ENCODE measurements at regions of chr6 and their contacts with region 1.

Region 1: GRCh38 chr6:1596088-1596852 is 13.4 kb upstream of the FOXC1 start:
- DNase-seq: peak; percentile 91
- H3K4me3 ChIP-seq: peak overlapping the region; percentile 34 to 60
- H3K27ac ChIP-seq: no peak overlapping the region
- H3K4me1 ChIP-seq: peaks cover 0 to 13% of the 10 kb centered on the region in 2 experiments; a peak in 1 of 4 replicates
- H3K27me3 ChIP-seq: peaks cover 44% of the 10 kb centered on the region
- CTCF ChIP-seq: peak; percentile 92
- EP300 ChIP-seq: no peak
- RAD21 ChIP-seq: peak; percentile 90

Region 2: DNA sequence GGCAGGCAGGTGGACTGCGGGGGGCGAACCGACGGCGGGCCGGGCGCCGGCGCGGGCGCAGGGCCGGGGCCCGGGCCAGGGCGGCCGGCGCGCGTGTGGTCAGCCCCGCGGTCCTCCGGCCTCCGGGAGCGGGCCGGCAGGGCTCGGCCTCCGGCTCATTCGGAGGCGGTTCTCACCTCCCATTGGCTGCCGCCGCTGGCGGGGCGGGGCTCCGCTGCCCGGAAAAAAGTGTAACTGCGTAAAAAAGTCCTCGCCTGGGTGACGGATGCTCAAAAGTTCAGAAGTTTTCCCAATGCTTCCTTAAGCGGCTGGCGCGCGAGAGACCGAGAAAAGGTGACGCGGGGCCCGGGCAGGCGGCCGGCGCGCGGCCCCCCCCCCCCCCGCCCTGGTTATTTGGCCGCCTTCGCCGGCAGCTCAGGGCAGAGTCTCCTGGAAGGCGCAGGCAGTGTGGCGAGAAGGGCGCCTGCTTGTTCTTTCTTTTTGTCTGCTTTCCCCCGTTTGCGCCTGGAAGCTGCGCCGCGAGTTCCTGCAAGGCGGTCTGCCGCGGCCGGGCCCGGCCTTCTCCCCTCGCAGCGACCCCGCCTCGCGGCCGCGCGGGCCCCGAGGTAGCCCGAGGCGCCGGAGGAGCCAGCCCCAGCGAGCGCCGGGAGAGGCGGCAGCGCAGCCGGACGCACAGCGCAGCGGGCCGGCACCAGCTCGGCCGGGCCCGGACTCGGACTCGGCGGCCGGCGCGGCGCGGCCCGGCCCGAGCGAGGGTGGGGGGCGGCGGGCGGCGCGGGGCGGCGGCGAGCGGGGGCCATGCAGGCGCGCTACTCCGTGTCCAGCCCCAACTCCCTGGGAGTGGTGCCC is 13.6 kb after region 1 on chr6 and contains the start of gene FOXC1:
- CTCF ChIA-PET with region 1: interaction called, 25 read pairs
- POLR2A ChIA-PET with region 1: no interaction called
- DNase-seq: peak; percentile 97
- H3K4me3 ChIP-seq: peak within 1 kb of the TSS; percentile 70 to 79
- H3K27ac ChIP-seq: peak within 1 kb of the TSS; percentile 72 to 90
- H3K4me1 ChIP-seq: peaks cover 0 to 6% of the 10 kb centered on the region in 2 experiments; a peak in 1 of 4 replicates
- H3K27me3 ChIP-seq: no peaks in the 10 kb centered on the region
- CTCF ChIP-seq: no peak
- EP300 ChIP-seq: no peak
- RAD21 ChIP-seq: no peak
- polyA plus RNA-seq, gene FOXC1: 3.6 and 4.3 TPM in 2 replicates

Region 3: GRCh38 chr6:2111162-2111677 is 515.0 kb after region 1 on chr6:
- CTCF ChIA-PET with region 1: interaction called, 20 read pairs
- POLR2A ChIA-PET with region 1: no interaction called
- DNase-seq: no peak
- H3K4me3 ChIP-seq: no peak overlapping the region
- H3K27ac ChIP-seq: peak overlapping the region in 1 of 2 experiments; percentile 73; a peak in 2 of 4 replicates
- H3K4me1 ChIP-seq: peaks cover 0 to 7% of the 10 kb centered on the region in 2 experiments; a peak in 1 of 4 replicates
- H3K27me3 ChIP-seq: no peaks in the 10 kb centered on the region
- CTCF ChIP-seq: no peak
- EP300 ChIP-seq: peak in 1 of 2 experiments; percentile 15; a peak in 1 of 4 replicates
- RAD21 ChIP-seq: no peak

Region 4: GRCh38 chr6:2196079-2196679 is 599.9 kb after region 1 on chr6:
- CTCF ChIA-PET with region 1: interaction called, 41 read pairs
- POLR2A ChIA-PET with region 1: interaction called, 4 read pairs
- DNase-seq: peak; percentile 57
- H3K4me3 ChIP-seq: no peak overlapping the region
- H3K27ac ChIP-seq: peak overlapping the region in 1 of 2 experiments; percentile 22; a peak in 1 of 4 replicates
- H3K4me1 ChIP-seq: peaks cover 8 to 13% of the 10 kb centered on the region in 2 experiments
- H3K27me3 ChIP-seq: no peaks in the 10 kb centered on the region
- CTCF ChIP-seq: peak; percentile 82
- EP300 ChIP-seq: no peak
- RAD21 ChIP-seq: peak; percentile 86

Region 5: DNA sequence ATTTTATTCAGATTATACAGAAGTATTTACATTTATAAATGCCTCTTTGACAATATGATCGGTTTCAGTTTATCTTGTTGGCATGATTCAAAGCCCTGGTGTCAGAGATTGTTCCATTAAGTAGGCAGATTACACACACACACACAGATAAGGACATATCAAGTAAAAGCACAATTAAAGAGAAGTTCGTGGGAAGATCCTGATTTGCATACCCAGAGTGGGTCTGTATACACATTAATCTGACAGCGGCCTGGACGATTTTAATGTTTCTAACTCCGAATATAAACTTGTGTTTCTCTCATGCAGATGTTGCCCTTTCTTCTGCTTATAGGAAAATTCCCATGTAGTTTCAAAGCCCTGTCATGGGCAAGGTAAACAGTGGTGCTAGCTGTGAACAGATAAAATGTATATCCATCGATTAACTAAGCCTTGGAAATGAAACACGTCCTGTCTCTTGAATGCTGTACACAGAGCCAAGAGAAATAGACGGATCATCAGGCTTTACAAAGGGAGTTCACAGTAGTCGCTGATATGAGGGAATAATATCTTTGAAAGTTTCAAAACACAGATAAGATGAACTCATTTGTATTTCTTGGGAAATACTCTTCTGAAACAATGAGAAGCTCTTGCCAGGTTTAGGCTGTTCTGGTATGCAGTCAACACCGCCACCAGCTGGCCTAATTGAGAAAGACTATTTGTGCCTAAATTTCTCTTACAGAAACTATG is 757.3 kb after region 1 on chr6:
- CTCF ChIA-PET with region 1: interaction called, 95 read pairs
- POLR2A ChIA-PET with region 1: no interaction called
- DNase-seq: peak; percentile 58
- H3K4me3 ChIP-seq: no peak overlapping the region; a peak in 1 of 4 replicates
- H3K27ac ChIP-seq: no peak overlapping the region
- H3K4me1 ChIP-seq: no peaks in the 10 kb centered on the region
- H3K27me3 ChIP-seq: no peaks in the 10 kb centered on the region
- CTCF ChIP-seq: peak; percentile 93
- EP300 ChIP-seq: no peak
- RAD21 ChIP-seq: peak; percentile 92

Region 6: GRCh38 chr6:2634139-2634964 is 1038.1 kb after region 1 on chr6:
- CTCF ChIA-PET with region 1: interaction called, 59 read pairs
- POLR2A ChIA-PET with region 1: no interaction called
- DNase-seq: peak; percentile 93
- H3K4me3 ChIP-seq: peak overlapping the region; percentile 49 to 68
- H3K27ac ChIP-seq: no peak overlapping the region
- H3K4me1 ChIP-seq: peaks cover 6 to 11% of the 10 kb centered on the region in 2 experiments; a peak in 2 of 4 replicates
- H3K27me3 ChIP-seq: no peaks in the 10 kb centered on the region; the same call in 1 of the 2 replicates
- CTCF ChIP-seq: peak; percentile 97
- EP300 ChIP-seq: no peak
- RAD21 ChIP-seq: peak; percentile 81

Region 7: DNA sequence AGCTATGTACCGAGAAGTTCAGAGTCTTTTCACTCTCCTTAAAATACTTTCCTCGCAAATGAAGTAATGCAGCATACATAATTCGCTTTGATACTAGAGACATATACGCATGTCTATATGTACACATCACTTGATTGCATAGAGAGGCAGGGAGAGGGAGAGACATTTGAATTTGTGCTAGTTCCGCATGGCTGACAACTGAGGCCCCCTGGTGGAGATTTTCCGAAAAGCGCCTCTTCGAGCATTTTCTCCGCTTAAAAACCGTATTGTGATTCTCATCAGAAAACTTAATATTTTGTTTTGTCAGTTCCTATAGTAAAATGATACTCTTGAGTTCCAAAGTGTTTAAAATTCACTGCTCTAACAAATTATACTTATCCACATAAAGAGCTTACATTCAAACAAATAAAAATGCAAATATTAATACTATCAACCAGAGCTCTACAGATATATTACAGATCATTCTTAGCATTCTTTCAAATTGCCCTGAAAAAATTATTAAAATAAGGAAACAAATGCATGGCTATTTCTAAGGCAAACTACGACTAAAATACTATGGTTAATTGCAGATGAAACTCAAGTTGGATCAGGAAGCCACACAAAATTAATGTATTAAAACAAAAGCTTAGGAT is 1153.8 kb after region 1 on chr6:
- CTCF ChIA-PET with region 1: interaction called, 20 read pairs
- POLR2A ChIA-PET with region 1: no interaction called
- DNase-seq: peak; percentile 55
- H3K4me3 ChIP-seq: peak overlapping the region in 1 of 2 experiments; percentile 18; a peak in 1 of 4 replicates
- H3K27ac ChIP-seq: no peak overlapping the region
- H3K4me1 ChIP-seq: peaks cover 0 to 11% of the 10 kb centered on the region in 2 experiments; a peak in 3 of 4 replicates
- H3K27me3 ChIP-seq: no peaks in the 10 kb centered on the region
- CTCF ChIP-seq: peak; percentile 91
- EP300 ChIP-seq: no peak
- RAD21 ChIP-seq: peak; percentile 62